Esophagus muscularis mucosa (tissue), 4 donors: ENCODE measurements at regions of chr14 and their contacts with region 1.

Region 1: GRCh38 chr14:94051115-94051514 is 25.0 kb downstream of the OTUB2 start:
- DNase-seq: peak; percentile 92
- H3K4me3 ChIP-seq: no peak overlapping the region
- H3K27ac ChIP-seq: peak overlapping the region in 3 of 4 donors; percentile 14 to 46 (median 33)
- H3K4me1 ChIP-seq: peaks cover 20 to 32% (median 31%) of the 10 kb centered on the region in 4 donors
- H3K27me3 ChIP-seq: no peaks in the 10 kb centered on the region
- CTCF ChIP-seq: peak; percentile 41 to 54 (median 51)
- EP300 ChIP-seq: no peak
- POLR2A ChIP-seq: no peak

Region 2: GRCh38 chr14:94074534-94074933 is 23.4 kb after region 1 on chr14:
- intact Hi-C with region 1: loop called (anchors 2 kb)
- DNase-seq: no peak
- H3K4me3 ChIP-seq: no peak overlapping the region
- H3K27ac ChIP-seq: no peak overlapping the region
- H3K4me1 ChIP-seq: peaks cover 38 to 49% (median 40%) of the 10 kb centered on the region in 4 donors
- H3K27me3 ChIP-seq: no peaks in the 10 kb centered on the region
- CTCF ChIP-seq: no peak
- EP300 ChIP-seq: no peak
- POLR2A ChIP-seq: no peak